ENCODE measurements at regions of chr1 and their contacts with region 1.

Region 1: GRCh38 chr1:201042779-201043461 is 19.4 kb upstream of the KIF21B start:
- DNase-seq: peak; percentile 57 to 88
- ATAC-seq: peak; percentile 80 to 99 (median 94)
- H3K4me3 ChIP-seq: no peak overlapping the region
- H3K4me3 Mint-ChIP-seq: no peak overlapping the region
- H3K27ac ChIP-seq: no peak overlapping the region
- H3K27ac Mint-ChIP-seq: no peak overlapping the region
- H3K4me1 ChIP-seq: peaks cover 4% of the 10 kb centered on the region
- H3K4me1 Mint-ChIP-seq: peaks cover 0 to 5% of the 10 kb centered on the region in 2 donors
- H3K27me3 ChIP-seq: no peaks in the 10 kb centered on the region
- H3K27me3 Mint-ChIP-seq: peaks cover 0 to 6% of the 10 kb centered on the region in 2 donors
- CTCF ChIP-seq: peak; percentile 86

Region 2: GRCh38 chr1:200802865-200803512 is 239.9 kb before region 1 on chr1:
- intact Hi-C with region 1: loop called (anchors 5 kb)
- DNase-seq: peak; percentile 48 to 89
- ATAC-seq: peak; percentile 82 to 89 (median 85)
- H3K4me3 ChIP-seq: no peak overlapping the region
- H3K4me3 Mint-ChIP-seq: no peak overlapping the region
- H3K27ac ChIP-seq: no peak overlapping the region
- H3K27ac Mint-ChIP-seq: no peak overlapping the region
- H3K4me1 ChIP-seq: no peaks in the 10 kb centered on the region
- H3K4me1 Mint-ChIP-seq: peaks cover 0 to 6% of the 10 kb centered on the region in 2 donors
- H3K27me3 ChIP-seq: no peaks in the 10 kb centered on the region
- H3K27me3 Mint-ChIP-seq: peaks cover 19 to 27% of the 10 kb centered on the region in 2 donors
- CTCF ChIP-seq: peak; percentile 90

Region 3: DNA sequence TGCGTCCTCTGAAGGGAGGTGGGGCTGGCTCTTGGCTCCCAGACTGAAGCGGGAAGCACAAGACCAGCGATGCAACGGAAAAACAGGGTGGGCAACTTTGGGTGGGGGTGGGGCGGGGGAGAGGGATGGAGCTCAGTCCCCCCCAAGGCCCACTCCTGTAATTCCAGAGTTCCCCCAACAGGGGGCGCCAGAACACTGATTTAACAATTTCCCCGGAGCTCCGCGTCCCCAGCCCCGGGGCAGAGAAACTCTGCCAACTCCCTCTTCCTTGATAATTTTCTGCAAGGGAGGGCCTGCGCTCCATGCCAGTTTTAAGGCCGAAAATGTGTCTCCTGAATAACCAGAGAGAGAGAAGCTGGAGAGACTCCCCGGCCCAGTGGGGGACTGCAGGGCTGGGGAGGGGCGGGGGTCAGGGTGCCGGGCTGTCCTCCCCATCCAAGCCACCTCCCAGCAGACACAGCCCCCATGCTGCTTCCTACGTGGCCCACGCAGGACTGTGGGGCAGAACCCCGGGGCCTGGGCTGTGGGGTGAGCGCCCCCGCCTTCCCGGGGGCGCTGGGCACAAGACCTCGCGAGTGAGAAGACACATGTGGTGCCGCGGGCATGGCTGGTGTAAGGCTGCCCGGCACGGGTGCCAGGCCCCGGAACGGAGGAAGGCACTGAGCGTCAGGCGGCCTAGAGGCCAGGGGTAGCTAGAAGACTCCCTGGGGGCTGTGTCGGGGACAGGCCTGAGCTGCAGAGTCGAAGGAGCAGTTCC is 70.8 kb before region 1 on chr1:
- intact Hi-C with region 1: loop called (anchors 1 kb)
- DNase-seq: peak; percentile 58 to 75
- ATAC-seq: peak; percentile 40 to 53 (median 47)
- H3K4me3 ChIP-seq: no peak overlapping the region
- H3K4me3 Mint-ChIP-seq: no peak overlapping the region
- H3K27ac ChIP-seq: no peak overlapping the region
- H3K27ac Mint-ChIP-seq: peak overlapping the region in 1 of 2 donors; percentile 71
- H3K4me1 ChIP-seq: peaks cover 14% of the 10 kb centered on the region
- H3K4me1 Mint-ChIP-seq: peaks cover 14 to 35% of the 10 kb centered on the region in 2 donors
- H3K27me3 ChIP-seq: no peaks in the 10 kb centered on the region
- H3K27me3 Mint-ChIP-seq: no peaks in the 10 kb centered on the region
- CTCF ChIP-seq: peak; percentile 97

Region 4: DNA sequence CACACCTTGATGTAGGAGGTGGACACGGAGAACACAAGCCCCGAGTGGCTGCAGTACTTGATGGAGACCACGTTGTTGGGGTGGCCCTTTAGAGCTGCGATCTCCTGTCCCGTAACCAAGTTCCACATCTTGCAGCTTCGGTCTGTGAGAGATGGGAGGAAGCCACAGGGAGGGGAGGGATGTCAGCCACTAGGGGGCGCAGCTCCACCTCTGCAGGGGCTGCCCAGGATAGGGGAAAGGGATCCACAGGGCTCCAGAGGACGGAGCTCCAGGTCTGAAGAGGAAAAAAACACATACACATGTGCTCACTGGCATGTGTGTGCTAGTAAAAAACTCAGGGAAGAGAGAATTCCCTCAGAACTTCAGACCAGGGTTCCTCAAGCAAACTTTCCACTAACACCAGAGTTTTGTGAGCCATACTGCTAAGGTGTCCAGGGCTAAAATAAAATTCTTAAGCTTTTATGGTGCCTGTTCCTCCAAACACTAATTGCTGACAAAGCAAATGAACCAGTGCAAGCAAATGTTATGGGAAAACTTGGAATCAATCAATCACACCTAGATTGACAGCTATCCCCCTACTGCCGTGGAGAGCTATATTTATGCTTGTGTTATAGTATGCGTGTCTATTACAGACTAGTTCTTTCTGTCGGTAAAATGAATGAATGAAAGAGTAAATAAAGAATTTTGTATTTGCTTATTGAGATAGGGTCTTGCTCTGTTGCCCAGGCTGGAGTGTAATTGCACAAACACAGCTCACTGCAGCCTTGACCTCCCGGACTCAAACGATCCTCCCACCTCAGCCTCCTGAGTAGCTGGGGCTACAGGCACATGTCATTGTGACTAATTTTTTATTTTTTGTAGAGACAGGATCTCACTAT is 63.1 kb before region 1 on chr1:
- intact Hi-C with region 1: loop called (anchors 1 kb)
- DNase-seq: peak; percentile 58 to 78
- ATAC-seq: peak; percentile 57 to 72 (median 67)
- H3K4me3 ChIP-seq: no peak overlapping the region
- H3K4me3 Mint-ChIP-seq: no peak overlapping the region
- H3K27ac ChIP-seq: no peak overlapping the region
- H3K27ac Mint-ChIP-seq: peak overlapping the region in 1 of 2 donors; percentile 56
- H3K4me1 ChIP-seq: no peaks in the 10 kb centered on the region
- H3K4me1 Mint-ChIP-seq: peaks cover 0 to 4% of the 10 kb centered on the region in 2 donors
- H3K27me3 ChIP-seq: no peaks in the 10 kb centered on the region
- H3K27me3 Mint-ChIP-seq: no peaks in the 10 kb centered on the region
- CTCF ChIP-seq: peak; percentile 77

Region 5: DNA sequence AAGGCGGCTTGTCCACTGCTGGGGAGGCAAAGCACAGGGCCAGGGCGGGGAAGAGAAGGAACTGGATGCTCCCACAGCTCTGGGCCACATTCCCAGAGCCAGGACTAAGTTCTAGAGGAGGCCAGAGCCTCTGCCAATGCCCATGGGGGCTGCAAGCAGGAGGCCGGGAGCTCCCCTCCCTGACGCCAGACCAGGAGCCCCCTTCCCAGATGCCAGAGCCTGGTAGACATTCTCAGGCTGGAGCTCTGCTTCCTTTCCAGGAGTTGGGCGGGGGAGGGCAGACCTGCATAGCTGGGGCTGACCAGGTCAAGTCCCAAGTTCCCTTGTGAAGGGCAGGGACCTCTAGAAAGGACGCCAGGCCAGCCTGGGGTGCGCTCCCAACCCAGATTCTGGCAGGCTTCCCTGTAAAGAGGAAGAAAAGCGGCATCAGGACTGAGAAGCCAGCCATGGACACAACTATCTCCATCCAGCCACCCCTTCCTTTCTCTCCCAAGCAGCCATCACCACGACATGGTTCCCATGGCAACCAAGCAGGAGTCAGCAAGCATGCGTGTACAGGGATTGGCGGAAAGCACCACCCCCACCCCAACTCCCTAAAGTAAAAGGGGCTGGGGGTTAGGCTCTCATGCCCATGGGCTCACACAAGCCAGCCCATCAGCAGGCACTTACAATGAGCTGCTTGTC is 32.8 kb before region 1 on chr1:
- intact Hi-C with region 1: no loop called
- DNase-seq: no peak
- ATAC-seq: no peak
- H3K4me3 ChIP-seq: no peak overlapping the region
- H3K4me3 Mint-ChIP-seq: no peak overlapping the region
- H3K27ac ChIP-seq: no peak overlapping the region
- H3K27ac Mint-ChIP-seq: peak overlapping the region in 1 of 2 donors; percentile 52
- H3K4me1 ChIP-seq: peaks cover 67% of the 10 kb centered on the region
- H3K4me1 Mint-ChIP-seq: peaks cover 42 to 47% of the 10 kb centered on the region in 2 donors
- H3K27me3 ChIP-seq: no peaks in the 10 kb centered on the region
- H3K27me3 Mint-ChIP-seq: no peaks in the 10 kb centered on the region
- CTCF ChIP-seq: no peak